Activated T-helper 1 cell treated with anti-CD3 and anti-CD28 coated beads, Interleukin-12 subunit alpha, Interleukin-12 subunit beta, Interleukin-2, Interleukin-4 antibody, amounts not matched to agents 30 ng/mL and 10 ng/mL and 1 ng/mL, durations not matched to agents 14 hours and 24 hours and 36 hours (primary cell): ENCODE measurements at regions of chr1 and their contacts with region 1.

Region 1: DNA sequence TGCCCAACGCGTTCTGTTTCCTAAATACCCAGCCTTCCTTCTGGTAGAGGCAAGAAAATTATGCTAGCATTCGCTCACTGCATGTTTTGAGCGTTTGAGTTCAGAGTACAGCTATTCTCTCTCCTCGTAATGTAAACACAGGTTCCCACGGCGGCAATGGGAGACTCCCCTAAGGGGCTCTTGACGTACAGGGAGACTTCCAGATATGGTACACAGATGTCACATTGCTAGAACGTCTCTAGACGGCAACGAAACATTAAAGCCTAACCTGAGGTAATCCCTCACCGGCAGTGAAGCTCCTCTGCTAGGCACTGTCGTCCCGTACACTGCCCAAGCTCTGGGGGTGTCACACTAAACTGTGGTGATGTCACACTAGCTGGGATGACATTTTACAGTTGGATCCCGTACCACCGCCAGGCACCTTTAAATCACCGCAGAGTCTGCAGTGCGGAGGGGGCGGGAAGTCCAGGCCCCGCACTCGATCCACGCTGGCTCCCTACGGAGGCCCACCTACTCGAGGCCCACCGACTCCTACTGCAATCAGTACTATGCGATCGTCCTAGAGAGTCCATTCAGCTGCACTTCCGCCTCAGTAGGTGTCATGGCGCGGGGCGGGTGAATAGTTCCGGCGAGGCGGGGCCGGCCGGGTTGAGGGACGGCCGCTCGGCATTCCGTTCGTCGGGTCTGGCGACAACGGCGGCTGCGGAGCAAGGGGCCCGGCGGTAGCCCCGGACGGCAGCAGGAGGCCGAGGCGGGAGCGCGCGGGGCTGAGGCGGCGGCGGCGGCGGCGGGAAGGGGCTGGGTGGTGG is at the start of gene HIPK1:
- DNase-seq: peak; percentile 91
- H3K4me3 Mint-ChIP-seq: peak within 1 kb of the TSS; percentile 98
- H3K27ac Mint-ChIP-seq: peak within 1 kb of the TSS; percentile 99
- H3K4me1 Mint-ChIP-seq: peaks cover 55% of the 10 kb centered on the region
- H3K27me3 Mint-ChIP-seq: peaks cover 7% of the 10 kb centered on the region
- total RNA-seq, gene HIPK1: 100 and 101 TPM in 2 replicates

Region 2: DNA sequence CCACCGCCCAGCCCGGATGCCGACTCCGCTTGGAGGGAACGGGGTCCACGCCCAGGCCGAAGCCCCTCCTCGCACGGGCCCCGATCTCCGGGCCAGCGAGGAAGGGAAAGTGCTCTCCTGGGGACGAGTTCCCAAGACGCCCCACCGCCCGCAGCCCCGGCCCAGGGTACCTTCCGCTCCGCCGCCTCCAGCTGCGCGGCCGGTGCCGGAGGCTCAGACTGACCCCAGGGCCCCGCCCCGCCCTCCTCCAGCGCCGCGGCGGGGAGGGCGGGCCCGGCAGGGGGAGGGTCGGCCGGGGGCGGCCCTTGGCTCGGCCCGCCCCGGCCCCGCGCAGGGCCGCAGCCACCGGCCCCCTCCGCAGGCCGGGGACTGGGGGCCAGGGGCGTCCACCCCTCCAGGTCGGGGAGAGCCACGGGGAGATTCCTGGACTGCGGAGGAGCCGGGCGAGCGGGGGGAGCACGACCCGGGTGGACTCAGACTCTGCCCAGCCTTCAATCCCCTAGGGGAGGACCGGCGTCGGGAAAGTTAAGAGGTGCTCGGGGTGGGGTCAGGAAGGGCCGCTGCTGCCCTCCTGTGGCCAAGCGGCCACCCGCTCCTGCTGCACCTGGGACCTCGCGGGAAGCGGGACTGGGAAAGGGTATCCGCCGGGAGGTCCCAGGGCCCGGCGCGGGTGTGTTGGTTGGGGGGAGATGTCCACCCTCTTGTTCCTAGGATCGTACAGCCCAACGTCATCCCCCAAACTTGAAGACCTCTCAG is 1222.1 kb before region 1 on chr1 and contains the start of gene RHOC:
- intact Hi-C with region 1: loop called (anchors 10 kb)
- DNase-seq: peak; percentile 60
- H3K4me3 Mint-ChIP-seq: peak within 1 kb of the TSS; percentile 84
- H3K27ac Mint-ChIP-seq: peak within 1 kb of the TSS; percentile 91
- H3K4me1 Mint-ChIP-seq: peaks cover 55% of the 10 kb centered on the region
- H3K27me3 Mint-ChIP-seq: peaks cover 13% of the 10 kb centered on the region
- total RNA-seq, gene RHOC: 50.4 and 63.4 TPM in 2 replicates

Region 3: DNA sequence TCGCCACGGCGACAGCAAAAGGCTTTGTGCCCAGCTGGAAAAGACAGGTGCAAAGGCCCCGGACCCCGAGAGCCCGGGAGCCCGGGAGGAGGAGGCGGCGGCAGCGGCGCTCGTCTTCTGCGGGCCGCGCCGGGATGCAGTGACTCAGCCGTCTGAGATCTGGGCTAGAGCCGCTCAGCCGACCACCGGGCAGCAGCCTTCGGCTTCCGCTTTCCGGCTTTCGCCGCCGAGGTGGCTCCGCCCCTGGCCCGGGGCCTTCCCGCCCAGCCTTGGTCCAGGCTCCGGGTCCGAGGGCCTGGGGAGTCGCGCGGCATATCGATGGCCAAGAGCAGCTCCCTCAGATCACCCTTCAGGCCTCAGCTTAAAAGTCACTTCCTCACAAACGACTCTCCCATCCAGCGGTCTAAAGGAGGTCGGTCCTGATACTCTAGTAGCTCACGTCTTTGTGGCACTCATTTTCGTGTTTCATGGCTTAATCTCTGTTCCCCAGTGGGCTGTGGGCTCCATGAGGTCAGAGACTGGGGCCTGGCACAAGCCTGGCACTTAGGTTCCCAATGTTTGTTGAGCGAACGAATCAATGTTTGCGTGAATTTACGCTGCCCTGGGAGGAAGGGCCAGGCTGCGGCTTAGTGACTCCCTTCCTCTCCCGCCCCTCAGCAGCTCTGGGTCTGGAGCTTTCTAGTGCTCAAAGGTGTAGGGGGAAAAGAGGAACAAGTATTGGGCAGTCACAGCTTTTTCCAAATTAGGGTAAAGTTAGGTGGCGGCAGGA is 169.6 kb before region 1 on chr1 and contains the start of gene PHTF1:
- intact Hi-C with region 1: loop called (anchors 1 kb)
- DNase-seq: peak; percentile 53
- H3K4me3 Mint-ChIP-seq: peak within 1 kb of the TSS; percentile 95
- H3K27ac Mint-ChIP-seq: peak within 1 kb of the TSS; percentile 97
- H3K4me1 Mint-ChIP-seq: peaks cover 37% of the 10 kb centered on the region
- H3K27me3 Mint-ChIP-seq: no peaks in the 10 kb centered on the region
- total RNA-seq, gene PHTF1: 14.7 and 16.6 TPM in 2 replicates

Region 4: GRCh38 chr1:113859478-113860175 is 69.5 kb before region 1 on chr1:
- intact Hi-C with region 1: no loop called
- DNase-seq: no peak
- H3K4me3 Mint-ChIP-seq: peak overlapping the region; percentile 24
- H3K27ac Mint-ChIP-seq: peak overlapping the region; percentile 62
- H3K4me1 Mint-ChIP-seq: peaks cover 43% of the 10 kb centered on the region
- H3K27me3 Mint-ChIP-seq: no peaks in the 10 kb centered on the region

Region 5: GRCh38 chr1:113871597-113872113 is 57.5 kb before region 1 on chr1 and contains the start of gene PTPN22:
- intact Hi-C with region 1: loop called (anchors 1 kb)
- DNase-seq: peak; percentile 80
- H3K4me3 Mint-ChIP-seq: peak within 1 kb of the TSS; percentile 93
- H3K27ac Mint-ChIP-seq: peak within 1 kb of the TSS; percentile 98
- H3K4me1 Mint-ChIP-seq: peaks cover 73% of the 10 kb centered on the region
- H3K27me3 Mint-ChIP-seq: no peaks in the 10 kb centered on the region
- total RNA-seq, gene PTPN22: 66.2 and 66.7 TPM in 2 replicates

Region 6: GRCh38 chr1:113978863-113979702 is 49.9 kb after region 1 on chr1 and contains the start of gene OLFML3:
- intact Hi-C with region 1: loop called (anchors 1 kb)
- DNase-seq: no peak
- H3K4me3 Mint-ChIP-seq: no peak within 1 kb of the TSS
- H3K27ac Mint-ChIP-seq: peak within 1 kb of the TSS; percentile 11
- H3K4me1 Mint-ChIP-seq: peaks cover 43% of the 10 kb centered on the region
- H3K27me3 Mint-ChIP-seq: no peaks in the 10 kb centered on the region
- total RNA-seq, gene OLFML3: 0.10 TPM in 2 replicates

Region 7: DNA sequence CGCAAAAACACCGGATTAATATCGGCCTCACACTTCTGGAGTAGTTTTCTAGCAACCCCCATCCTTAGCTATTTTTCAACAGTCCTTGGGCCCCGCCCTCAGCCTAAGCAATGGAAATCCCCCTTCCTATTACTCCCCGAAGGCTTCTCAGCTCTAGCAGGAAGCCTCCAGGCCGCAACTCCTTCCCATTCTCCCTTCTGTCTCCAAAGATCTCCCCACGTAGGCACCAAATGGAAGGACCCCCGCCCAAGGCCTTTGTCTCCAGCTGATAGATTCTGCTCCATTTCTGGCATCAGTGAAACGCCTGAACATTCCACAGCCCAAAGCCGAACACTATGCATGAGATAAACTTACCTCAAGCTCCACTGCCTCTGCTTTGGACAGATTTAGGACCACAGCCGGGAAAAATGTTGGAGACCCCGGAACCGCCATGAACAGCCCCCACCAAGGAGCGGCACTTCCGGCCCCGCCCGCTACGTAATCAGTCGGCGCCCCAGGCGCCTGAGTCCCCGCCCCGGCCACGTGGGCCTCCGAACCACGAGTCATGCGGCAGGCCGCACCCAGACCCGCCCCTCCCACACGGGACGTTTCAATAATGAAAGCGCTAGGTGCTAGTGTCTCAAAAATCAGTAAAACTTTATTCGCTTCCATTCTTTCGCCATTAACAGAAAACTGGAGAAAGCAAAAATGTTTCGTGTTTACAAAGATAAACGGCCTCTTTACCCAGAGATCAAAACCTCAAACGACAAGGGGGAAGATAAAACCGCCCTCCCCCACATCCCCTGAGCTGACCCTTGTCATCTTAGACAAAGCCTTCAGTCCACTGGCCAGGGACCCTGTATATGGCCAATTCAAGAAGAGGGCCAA is 787.4 kb after region 1 on chr1 and contains the start of gene NRAS:
- intact Hi-C with region 1: loop called (anchors 1 kb)
- DNase-seq: peak; percentile 93
- H3K4me3 Mint-ChIP-seq: peak within 1 kb of the TSS; percentile 99
- H3K27ac Mint-ChIP-seq: peak within 1 kb of the TSS; percentile 99
- H3K4me1 Mint-ChIP-seq: peaks cover 39% of the 10 kb centered on the region
- H3K27me3 Mint-ChIP-seq: no peaks in the 10 kb centered on the region
- total RNA-seq, gene NRAS: 57.5 and 62.1 TPM in 2 replicates